Uterus (tissue), 4 donors: ENCODE measurements at regions of chr11 and their contacts with region 1.

Region 1: DNA sequence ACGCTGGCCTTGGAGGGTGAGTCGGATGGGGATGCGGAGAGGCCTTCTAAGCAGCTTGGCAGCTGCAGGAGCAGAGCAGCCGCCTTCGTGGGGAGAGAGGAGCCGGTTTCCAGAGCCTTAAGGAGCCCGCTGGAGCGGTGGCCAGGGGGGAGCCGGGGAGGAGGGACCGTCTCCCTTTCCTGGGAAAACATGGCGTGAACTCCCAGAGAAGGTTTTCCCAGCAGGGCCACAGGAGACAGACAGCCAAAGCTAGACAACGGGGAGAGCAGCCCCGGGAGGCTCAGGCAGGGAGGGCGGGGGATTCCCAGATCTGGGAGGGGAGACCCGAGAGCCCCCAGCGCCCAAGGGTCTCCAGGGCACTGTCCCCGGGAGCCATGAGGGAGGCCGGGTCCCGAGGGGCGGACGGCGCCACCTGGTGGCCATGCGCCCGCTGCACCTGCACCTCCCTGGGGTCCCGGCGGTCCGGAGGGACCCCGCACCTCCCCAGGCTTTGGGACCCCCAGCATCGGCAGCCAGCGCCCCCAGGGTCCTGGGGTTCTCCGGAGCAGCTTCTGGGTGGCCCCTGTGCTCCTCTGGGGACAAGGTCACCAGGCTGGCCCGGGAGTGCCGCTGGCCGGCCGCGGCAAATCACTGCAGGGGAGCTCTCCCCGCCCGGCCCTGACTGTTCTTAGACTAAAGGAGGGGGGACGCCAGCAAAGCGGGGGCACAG is 2.4 kb upstream of the SYT8 start:
- DNase-seq: peak in 1 of 2 donors; percentile 55
- H3K4me3 ChIP-seq: no peak overlapping the region
- H3K27ac ChIP-seq: no peak overlapping the region
- H3K4me1 ChIP-seq: no peaks in the 10 kb centered on the region
- H3K27me3 ChIP-seq: no peaks in the 10 kb centered on the region
- CTCF ChIP-seq: peak; percentile 90 to 99 (median 96)
- POLR2A ChIP-seq: peak in 1 of 2 donors; percentile 9

Region 2: DNA sequence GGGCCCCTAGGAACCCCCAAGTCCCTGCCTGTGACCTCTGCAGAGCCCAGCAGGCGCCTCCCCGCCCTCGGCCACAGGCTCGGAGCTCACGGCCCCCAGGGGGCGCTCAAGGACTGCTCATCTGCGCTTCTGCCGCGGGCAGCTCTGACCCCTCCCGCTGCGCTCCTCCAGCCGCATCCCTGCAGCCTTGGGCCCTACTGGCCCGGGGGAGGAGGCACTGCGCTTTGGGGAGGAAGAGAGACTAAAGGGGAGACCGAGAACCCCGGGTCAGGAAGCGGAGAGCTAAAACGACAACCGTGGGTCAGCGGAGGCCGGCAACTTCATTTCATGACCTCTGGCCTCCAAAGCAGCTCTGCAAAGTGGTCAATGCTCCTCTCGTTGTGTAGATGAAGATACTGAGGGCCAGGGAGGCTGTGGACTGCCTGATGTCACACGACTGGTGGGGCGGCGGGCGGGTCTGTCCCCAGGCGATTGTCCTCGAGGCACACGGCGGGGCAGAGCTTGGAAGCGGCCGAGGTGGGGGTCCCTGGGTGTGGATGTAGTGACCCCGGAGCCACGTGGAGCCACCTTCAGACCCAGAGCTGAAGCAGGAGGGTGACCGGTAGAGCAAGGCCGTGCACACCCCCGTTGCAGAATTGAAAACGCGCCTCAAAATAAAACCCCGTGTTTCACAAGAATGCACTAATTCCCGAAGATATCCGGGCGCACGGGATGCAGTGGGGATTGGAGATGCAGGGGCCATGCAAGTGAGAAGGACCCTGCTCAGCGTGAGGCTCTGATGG is 138.1 kb before region 1 on chr11:
- intact Hi-C with region 1: loop called (anchors 1 kb)
- DNase-seq: peak; percentile 76 to 84
- H3K4me3 ChIP-seq: peak overlapping the region in 1 of 2 donors; percentile 5
- H3K27ac ChIP-seq: peak overlapping the region; percentile 55 to 58
- H3K4me1 ChIP-seq: peaks cover 0 to 7% of the 10 kb centered on the region in 2 donors
- H3K27me3 ChIP-seq: no peaks in the 10 kb centered on the region
- CTCF ChIP-seq: peak; percentile 93 to 96 (median 94)
- POLR2A ChIP-seq: no peak

Region 3: DNA sequence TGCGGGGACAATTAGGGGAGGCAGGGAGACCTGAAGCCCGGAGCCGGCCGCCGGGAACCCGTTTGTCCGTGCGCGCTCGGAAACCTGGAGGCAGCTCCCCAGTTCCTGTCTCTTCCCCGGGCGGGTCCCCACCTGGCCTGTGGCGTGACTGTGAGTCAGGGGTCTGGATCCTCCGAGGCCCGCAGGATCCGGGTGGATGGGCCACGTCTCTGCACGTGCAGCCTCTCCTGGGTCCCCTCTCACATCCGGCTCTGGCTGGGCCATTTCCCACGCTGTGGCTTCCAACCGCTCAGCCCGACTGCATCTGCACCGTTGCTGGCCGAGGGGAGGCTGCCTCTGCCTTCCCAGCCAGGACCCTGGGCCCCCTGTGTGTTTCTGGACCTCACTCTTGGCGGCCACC is 180.1 kb after region 1 on chr11:
- intact Hi-C with region 1: no loop called
- DNase-seq: no peak
- H3K4me3 ChIP-seq: no peak overlapping the region
- H3K27ac ChIP-seq: no peak overlapping the region
- H3K4me1 ChIP-seq: no peaks in the 10 kb centered on the region
- H3K27me3 ChIP-seq: no peaks in the 10 kb centered on the region
- CTCF ChIP-seq: no peak
- POLR2A ChIP-seq: no peak